ENCODE measurements at regions of chr20 and their contacts with region 1.

Region 1: DNA sequence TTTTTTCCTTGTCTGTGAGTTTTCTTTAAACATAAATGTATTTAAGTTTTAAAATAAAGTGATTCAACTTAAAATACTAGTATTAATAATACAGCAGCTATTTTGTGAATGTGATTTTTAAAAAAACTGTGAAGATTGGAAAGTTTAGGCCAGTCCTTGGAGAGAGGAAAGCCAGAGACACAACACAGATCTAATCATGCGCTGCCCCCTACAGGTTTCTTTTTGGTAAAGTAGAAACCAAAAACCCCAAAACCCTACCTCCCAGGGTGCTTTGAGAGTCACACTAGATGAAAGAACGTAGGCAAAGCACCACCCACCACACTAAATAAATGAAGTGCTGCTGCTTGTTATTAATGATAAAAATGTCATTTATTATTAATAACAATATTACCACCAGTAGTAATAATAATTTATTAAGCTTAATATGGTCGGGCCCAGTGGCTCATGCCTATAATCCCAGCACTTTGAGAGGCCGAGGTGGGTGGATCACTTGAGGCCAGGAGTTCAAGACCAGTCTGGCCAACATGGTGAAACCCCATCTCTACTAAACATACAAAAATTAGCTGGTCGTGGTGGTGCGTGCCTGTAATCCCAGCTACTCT is 33.7 kb downstream of the SLC9A8 start:
- DNase-seq: peak; percentile 85
- ATAC-seq: peak; percentile 93
- H3K4me3 ChIP-seq: no peak overlapping the region
- H3K27ac ChIP-seq: no peak overlapping the region
- H3K4me1 ChIP-seq: 0 out of 2 replicates have a peak, but pooled peaks cover 9% of the 10 kb centered on the region
- H3K27me3 ChIP-seq: no peaks in the 10 kb centered on the region
- CTCF ChIP-seq: peak; percentile 85

Region 2: DNA sequence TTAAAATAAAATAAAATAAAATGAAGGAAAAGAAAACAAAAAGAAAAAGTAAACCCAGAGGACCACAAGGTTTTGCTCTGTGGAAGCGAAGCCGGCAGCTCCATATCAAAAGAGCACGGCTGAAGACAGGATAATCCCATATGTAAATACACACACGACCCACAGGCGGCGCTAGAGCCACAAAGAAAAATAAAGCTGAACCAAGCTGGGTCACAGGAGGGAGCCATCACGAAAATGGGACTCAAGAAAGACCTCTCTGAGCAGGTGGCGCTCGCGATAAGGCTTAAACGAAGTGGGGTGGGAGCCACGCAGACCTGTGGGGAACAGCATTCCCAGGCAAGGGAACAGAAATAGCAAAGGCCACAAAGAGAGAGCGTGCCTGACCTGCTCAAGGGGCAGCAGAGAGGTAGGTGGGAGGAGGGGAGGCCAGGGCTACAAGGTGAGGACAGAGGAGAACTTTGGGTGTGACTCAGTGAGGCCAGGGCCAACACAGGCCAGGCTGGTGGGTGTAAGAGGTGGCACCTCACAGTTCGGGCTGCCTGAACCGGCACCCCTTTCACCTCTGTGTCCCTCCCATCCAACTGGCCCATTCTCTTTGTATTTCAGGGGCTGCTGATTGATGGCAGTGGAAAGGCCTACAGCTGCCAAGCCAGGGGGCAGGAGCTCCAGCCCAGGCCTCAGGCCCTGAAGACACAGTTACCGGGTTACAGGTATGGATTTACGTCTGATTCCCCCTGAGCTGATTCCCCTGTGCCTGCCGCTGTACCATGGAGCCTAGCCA is 304.4 kb before region 1 on chr20:
- CTCF ChIA-PET with region 1: interaction called, 16 read pairs
- POLR2A ChIA-PET with region 1: no interaction called
- intact Hi-C with region 1: loop called (anchors 5 kb)
- DNase-seq: peak; percentile 92
- ATAC-seq: peak; percentile 89
- H3K4me3 ChIP-seq: no peak overlapping the region
- H3K27ac ChIP-seq: no peak overlapping the region
- H3K4me1 ChIP-seq: no peaks in the 10 kb centered on the region
- H3K27me3 ChIP-seq: no peaks in the 10 kb centered on the region
- CTCF ChIP-seq: peak; percentile 99

Region 3: DNA sequence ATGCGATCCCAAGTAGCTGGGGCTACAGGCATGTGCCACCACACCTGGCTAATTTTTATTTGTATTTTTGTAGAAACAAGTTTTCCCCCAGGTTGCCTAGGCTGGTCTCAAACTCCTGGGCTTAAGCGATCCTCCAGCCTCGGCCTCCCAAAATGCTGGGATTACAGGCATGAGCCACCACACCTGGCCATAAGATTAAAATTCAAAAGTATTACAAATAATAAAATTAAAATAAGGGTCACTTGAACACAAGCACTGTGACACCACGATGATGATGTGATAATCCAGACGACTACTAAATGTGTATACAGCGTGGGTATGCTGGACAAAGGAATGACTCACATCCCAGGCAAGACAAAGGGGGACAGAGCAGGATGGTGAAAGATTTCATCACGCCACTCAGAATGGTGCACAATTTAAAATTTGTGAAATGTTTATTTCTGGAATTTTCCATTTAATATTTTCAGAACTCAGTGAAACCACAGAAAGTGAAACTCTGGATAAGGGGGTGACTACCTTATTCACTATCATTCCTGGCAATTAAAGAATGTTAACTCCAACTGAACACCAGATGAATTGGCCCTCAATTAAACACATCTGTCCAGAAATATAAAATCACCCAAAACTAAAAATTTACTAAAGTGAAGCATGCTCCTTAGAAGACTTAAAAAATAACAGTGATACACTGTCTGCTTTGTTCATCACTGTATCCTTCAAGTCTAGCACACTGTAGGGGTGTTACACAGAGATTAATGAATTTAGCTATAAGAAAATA is 145.7 kb before region 1 on chr20:
- CTCF ChIA-PET with region 1: no interaction called
- POLR2A ChIA-PET with region 1: interaction called, 14 read pairs
- intact Hi-C with region 1: no loop called
- DNase-seq: peak; percentile 85
- ATAC-seq: peak; percentile 78
- H3K4me3 ChIP-seq: peak overlapping the region; percentile 3; the same call in 1 of the 2 replicates
- H3K27ac ChIP-seq: peak overlapping the region; percentile 85
- H3K4me1 ChIP-seq: peaks cover 55% of the 10 kb centered on the region
- H3K27me3 ChIP-seq: no peaks in the 10 kb centered on the region
- CTCF ChIP-seq: no peak

Region 4: GRCh38 chr20:49713753-49714712 is 132.3 kb before region 1 on chr20 and contains the start of gene B4GALT5:
- CTCF ChIA-PET with region 1: interaction called, 16 read pairs
- POLR2A ChIA-PET with region 1: no interaction called
- intact Hi-C with region 1: no loop called
- DNase-seq: peak; percentile 80
- ATAC-seq: peak; percentile 81
- H3K4me3 ChIP-seq: peak within 1 kb of the TSS; percentile 94
- H3K27ac ChIP-seq: peak within 1 kb of the TSS; percentile 31
- H3K4me1 ChIP-seq: peaks cover 33% of the 10 kb centered on the region
- H3K27me3 ChIP-seq: no peaks in the 10 kb centered on the region
- CTCF ChIP-seq: no peak
- total RNA-seq, gene B4GALT5: 18.1 and 24.1 TPM in 2 replicates

Region 5: GRCh38 chr20:49724408-49725223 is 121.7 kb before region 1 on chr20:
- CTCF ChIA-PET with region 1: no interaction called
- POLR2A ChIA-PET with region 1: no interaction called
- intact Hi-C with region 1: loop called (anchors 5 kb)
- DNase-seq: peak; percentile 38
- ATAC-seq: peak; percentile 31; the same call in 1 of the 2 replicates
- H3K4me3 ChIP-seq: no peak overlapping the region
- H3K27ac ChIP-seq: no peak overlapping the region
- H3K4me1 ChIP-seq: peaks cover 3% of the 10 kb centered on the region; the same call in 1 of the 2 replicates
- H3K27me3 ChIP-seq: no peaks in the 10 kb centered on the region
- CTCF ChIP-seq: no peak

Region 6: GRCh38 chr20:49747707-49748524 is 98.4 kb before region 1 on chr20:
- CTCF ChIA-PET with region 1: interaction called, 14 read pairs
- POLR2A ChIA-PET with region 1: no interaction called
- intact Hi-C with region 1: no loop called
- DNase-seq: no peak
- ATAC-seq: no peak
- H3K4me3 ChIP-seq: no peak overlapping the region
- H3K27ac ChIP-seq: no peak overlapping the region
- H3K4me1 ChIP-seq: peaks cover 9% of the 10 kb centered on the region
- H3K27me3 ChIP-seq: no peaks in the 10 kb centered on the region
- CTCF ChIP-seq: no peak